ENCODE measurements at regions of chr10 and their contacts with region 1.

Region 1: GRCh38 chr10:95183271-95184230 is 10.5 kb upstream of the ACSM6 start:
- DNase-seq: peak; percentile 89 to 95
- H3K4me3 ChIP-seq: peak overlapping the region; percentile 46
- H3K4me3 Mint-ChIP-seq: peak overlapping the region; percentile 72
- H3K27ac Mint-ChIP-seq: peak overlapping the region; percentile 89
- H3K4me1 ChIP-seq: peaks cover 38% of the 10 kb centered on the region
- H3K4me1 Mint-ChIP-seq: peaks cover 32% of the 10 kb centered on the region
- H3K27me3 ChIP-seq: no peaks in the 10 kb centered on the region
- H3K27me3 Mint-ChIP-seq: no peaks in the 10 kb centered on the region
- CTCF ChIP-seq: peak; percentile 90 to 94

Region 2: GRCh38 chr10:94902570-94902969 is 281.0 kb before region 1 on chr10:
- CTCF ChIA-PET with region 1: no interaction called
- POLR2A ChIA-PET with region 1: no interaction called
- intact Hi-C with region 1: loop called (anchors 1 kb)
- DNase-seq: peak in 1 of 2 experiments; percentile 63
- H3K4me3 ChIP-seq: no peak overlapping the region
- H3K4me3 Mint-ChIP-seq: no peak overlapping the region
- H3K27ac Mint-ChIP-seq: no peak overlapping the region
- H3K4me1 ChIP-seq: peaks cover 18% of the 10 kb centered on the region
- H3K4me1 Mint-ChIP-seq: peaks cover 8% of the 10 kb centered on the region
- H3K27me3 ChIP-seq: no peaks in the 10 kb centered on the region
- H3K27me3 Mint-ChIP-seq: no peaks in the 10 kb centered on the region
- CTCF ChIP-seq: no peak

Region 3: DNA sequence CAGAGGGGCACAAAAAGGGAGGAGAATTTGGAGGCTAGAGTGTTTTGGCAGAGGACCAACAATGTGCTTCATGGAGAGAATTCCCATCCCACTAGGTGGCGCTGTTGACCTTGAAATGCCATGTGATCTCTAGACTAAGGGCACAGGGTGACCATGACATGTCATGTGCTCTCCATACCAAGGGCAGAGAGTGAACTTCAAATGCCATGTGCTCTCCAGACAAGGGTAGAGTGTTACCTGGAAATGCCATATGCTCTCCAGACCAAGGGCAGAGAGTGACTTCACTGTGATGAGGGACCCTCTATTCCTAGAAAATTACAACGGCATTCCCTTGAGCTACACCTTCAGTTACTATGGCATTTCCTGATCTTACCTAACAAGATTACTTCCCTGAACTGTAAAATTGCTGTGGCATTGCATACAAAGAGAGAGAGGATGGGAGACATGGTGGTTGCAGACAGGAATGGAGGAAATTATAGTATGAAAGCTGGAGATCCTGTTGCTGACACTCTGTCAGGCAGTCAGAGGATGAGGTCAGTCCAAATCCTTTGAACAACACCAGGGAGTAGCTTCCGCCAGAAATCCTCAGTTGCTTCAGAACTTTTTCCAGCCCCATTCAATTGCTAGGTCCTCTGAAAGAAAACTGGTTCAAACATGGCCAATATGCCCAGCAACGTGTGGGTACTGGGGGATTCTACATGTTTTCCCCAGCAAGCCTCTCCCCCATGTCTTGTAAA is 50.4 kb before region 1 on chr10:
- CTCF ChIA-PET with region 1: interaction called, 5 read pairs
- POLR2A ChIA-PET with region 1: no interaction called
- intact Hi-C with region 1: loop called (anchors 1 kb)
- DNase-seq: peak; percentile 86 to 89
- H3K4me3 ChIP-seq: no peak overlapping the region
- H3K4me3 Mint-ChIP-seq: no peak overlapping the region
- H3K27ac Mint-ChIP-seq: peak overlapping the region; percentile 53
- H3K4me1 ChIP-seq: peaks cover 22% of the 10 kb centered on the region
- H3K4me1 Mint-ChIP-seq: peaks cover 22% of the 10 kb centered on the region
- H3K27me3 ChIP-seq: no peaks in the 10 kb centered on the region
- H3K27me3 Mint-ChIP-seq: no peaks in the 10 kb centered on the region
- CTCF ChIP-seq: peak; percentile 77 to 94

Region 4: DNA sequence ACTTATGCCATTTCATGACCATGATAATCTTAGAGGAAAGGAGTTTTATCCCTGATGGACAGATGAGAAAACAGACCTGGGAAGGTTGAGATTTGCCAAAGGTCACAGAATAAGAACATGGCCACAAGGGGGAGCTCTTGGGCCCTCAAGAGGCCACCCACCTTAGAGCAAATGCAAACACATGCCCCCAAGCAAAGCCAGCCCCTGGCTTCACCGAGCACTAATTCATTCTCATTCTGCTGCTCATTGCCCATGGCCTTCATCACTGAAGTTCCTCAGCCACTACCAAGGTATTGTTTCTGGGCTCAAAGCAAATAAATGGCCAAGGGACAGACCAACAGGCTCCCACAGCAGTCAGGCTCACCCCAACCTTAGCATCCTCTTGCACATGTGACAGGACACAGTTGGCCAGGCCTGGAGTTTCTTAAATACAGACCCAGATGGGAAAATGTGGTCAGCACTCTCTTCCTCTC is 63.1 kb after region 1 on chr10:
- CTCF ChIA-PET with region 1: interaction called, 5 read pairs
- POLR2A ChIA-PET with region 1: no interaction called
- intact Hi-C with region 1: loop called (anchors 1 kb)
- DNase-seq: peak; percentile 74 to 82
- H3K4me3 ChIP-seq: no peak overlapping the region
- H3K4me3 Mint-ChIP-seq: no peak overlapping the region
- H3K27ac Mint-ChIP-seq: peak overlapping the region; percentile 7
- H3K4me1 ChIP-seq: peaks cover 25% of the 10 kb centered on the region
- H3K4me1 Mint-ChIP-seq: peaks cover 29% of the 10 kb centered on the region
- H3K27me3 ChIP-seq: no peaks in the 10 kb centered on the region
- H3K27me3 Mint-ChIP-seq: no peaks in the 10 kb centered on the region
- CTCF ChIP-seq: peak; percentile 77 to 90

Region 5: GRCh38 chr10:95346715-95347401 is 163.3 kb after region 1 on chr10:
- CTCF ChIA-PET with region 1: no interaction called
- POLR2A ChIA-PET with region 1: no interaction called
- intact Hi-C with region 1: loop called (anchors 2 kb)
- DNase-seq: peak; percentile 87 to 89
- H3K4me3 ChIP-seq: no peak overlapping the region
- H3K4me3 Mint-ChIP-seq: peak overlapping the region; percentile 57
- H3K27ac Mint-ChIP-seq: peak overlapping the region; percentile 93
- H3K4me1 ChIP-seq: peaks cover 66% of the 10 kb centered on the region
- H3K4me1 Mint-ChIP-seq: peaks cover 45% of the 10 kb centered on the region
- H3K27me3 ChIP-seq: no peaks in the 10 kb centered on the region
- H3K27me3 Mint-ChIP-seq: no peaks in the 10 kb centered on the region
- CTCF ChIP-seq: no peak